Ascending aorta (tissue), 2 donors: ENCODE measurements at regions of chr9 and their contacts with region 1.

Region 1: GRCh38 chr9:136567651-136568287 is 21.9 kb upstream of the NOTCH1 start:
- DNase-seq: peak; percentile 55 to 90
- H3K4me3 ChIP-seq: peak overlapping the region in 1 of 2 donors; percentile 14
- H3K27ac ChIP-seq: peak overlapping the region; percentile 65 to 66
- H3K4me1 ChIP-seq: peaks cover 34 to 58% of the 10 kb centered on the region in 2 donors
- H3K27me3 ChIP-seq: no peaks in the 10 kb centered on the region
- CTCF ChIP-seq: no peak

Region 2: DNA sequence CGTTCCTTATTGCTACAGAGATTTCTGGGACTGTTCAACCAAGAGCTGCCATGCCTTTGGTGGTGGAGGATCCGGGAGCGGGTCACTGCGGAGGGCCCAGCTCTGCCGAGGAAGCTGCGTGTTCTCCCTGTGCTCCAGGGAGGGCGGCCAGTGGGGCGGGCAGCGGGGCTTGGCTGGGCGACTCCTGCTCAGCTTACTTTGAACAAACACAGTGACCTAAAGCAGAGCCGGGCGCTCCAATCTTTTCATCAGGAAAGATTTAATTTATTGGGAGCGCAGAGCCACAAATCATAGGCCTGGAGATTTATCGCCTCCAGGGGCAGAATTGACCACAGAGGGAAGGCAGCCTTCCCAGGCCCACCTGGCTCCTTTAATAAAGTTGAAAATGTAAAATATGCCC is 390.5 kb before region 1 on chr9:
- intact Hi-C with region 1: no loop called
- DNase-seq: no peak
- H3K4me3 ChIP-seq: no peak overlapping the region
- H3K27ac ChIP-seq: no peak overlapping the region
- H3K4me1 ChIP-seq: no peaks in the 10 kb centered on the region
- H3K27me3 ChIP-seq: no peaks in the 10 kb centered on the region
- CTCF ChIP-seq: no peak

Region 3: GRCh38 chr9:136527721-136528691 is 39.8 kb before region 1 on chr9:
- intact Hi-C with region 1: loop called (anchors 10 kb)
- DNase-seq: no peak
- H3K4me3 ChIP-seq: no peak overlapping the region
- H3K27ac ChIP-seq: no peak overlapping the region
- H3K4me1 ChIP-seq: peaks cover 0 to 25% of the 10 kb centered on the region in 2 donors
- H3K27me3 ChIP-seq: no peaks in the 10 kb centered on the region
- CTCF ChIP-seq: no peak

Region 4: DNA sequence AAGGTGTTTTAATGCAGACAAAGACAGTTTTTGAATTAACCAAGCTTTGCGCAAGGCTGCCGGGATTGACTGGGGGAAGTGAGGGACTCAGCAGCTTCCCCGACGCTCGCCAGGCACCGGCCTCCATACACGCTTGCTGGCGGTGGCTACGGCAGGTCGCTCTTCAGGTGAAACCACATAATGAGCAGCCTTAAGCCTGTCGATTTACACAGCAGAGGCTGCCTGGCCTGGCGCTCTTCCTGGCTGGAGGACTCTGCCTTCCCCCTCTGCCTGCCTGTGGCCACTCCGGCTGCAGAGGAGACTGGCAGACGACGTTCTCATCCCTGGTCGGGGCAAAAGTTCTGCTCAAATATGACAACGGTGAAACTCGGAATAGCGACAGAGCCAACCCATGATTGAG is 12.9 kb before region 1 on chr9:
- intact Hi-C with region 1: no loop called
- DNase-seq: no peak
- H3K4me3 ChIP-seq: no peak overlapping the region
- H3K27ac ChIP-seq: no peak overlapping the region
- H3K4me1 ChIP-seq: peaks cover 14 to 35% of the 10 kb centered on the region in 2 donors
- H3K27me3 ChIP-seq: no peaks in the 10 kb centered on the region
- CTCF ChIP-seq: no peak

Region 5: GRCh38 chr9:136605988-136606660 is 38.4 kb after region 1 on chr9:
- intact Hi-C with region 1: loop called (anchors 5 kb)
- DNase-seq: peak in 1 of 2 donors; percentile 79
- H3K4me3 ChIP-seq: no peak overlapping the region
- H3K27ac ChIP-seq: peak overlapping the region; percentile 37 to 60
- H3K4me1 ChIP-seq: peaks cover 11 to 35% of the 10 kb centered on the region in 2 donors
- H3K27me3 ChIP-seq: no peaks in the 10 kb centered on the region
- CTCF ChIP-seq: no peak

Region 6: DNA sequence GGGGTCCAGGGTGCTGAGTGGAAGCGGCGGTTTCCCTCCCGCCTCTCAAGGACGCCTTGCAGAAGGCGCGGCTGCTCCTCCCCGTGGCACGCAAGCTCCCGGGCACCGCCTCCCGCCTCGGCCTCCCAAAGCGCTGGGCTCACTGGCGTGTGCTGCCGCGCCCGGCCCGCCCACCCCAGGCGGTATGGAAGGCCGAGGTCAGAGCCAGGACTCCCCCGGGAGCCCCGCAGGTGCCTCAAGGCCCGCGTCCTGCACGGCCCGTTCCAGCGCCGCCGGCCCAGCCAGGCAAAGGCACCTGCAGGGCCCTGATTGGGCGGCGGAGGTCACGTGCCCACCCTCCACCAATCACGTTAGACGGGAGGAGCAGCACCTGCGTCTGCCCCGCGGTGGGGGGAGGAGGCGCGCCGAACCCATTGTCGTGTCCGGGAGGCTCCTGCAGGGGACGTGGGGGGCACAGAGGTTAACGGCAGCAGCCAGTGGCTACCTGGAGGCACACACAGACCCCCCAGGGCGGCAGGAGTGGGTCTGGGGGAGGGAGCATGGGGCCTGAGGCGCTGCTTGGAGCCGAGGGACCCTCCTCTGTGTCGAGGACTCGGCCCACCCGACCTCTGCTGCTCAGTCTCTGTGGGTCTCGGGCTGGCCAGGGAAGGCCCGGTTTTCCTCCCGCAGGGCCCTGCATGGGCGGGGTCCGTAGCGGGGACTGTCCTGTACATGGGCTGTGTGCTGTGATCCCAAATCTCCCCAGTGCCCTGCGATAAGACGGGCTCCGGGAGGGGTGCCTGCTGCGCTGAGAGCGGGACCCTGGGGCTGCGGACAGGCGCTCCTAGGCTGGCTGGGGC is 382.3 kb after region 1 on chr9:
- intact Hi-C with region 1: no loop called
- DNase-seq: peak; percentile 88 to 96
- H3K4me3 ChIP-seq: peak overlapping the region; percentile 62 to 83
- H3K27ac ChIP-seq: peak overlapping the region; percentile 81 to 88
- H3K4me1 ChIP-seq: peaks cover 0 to 12% of the 10 kb centered on the region in 2 donors
- H3K27me3 ChIP-seq: no peaks in the 10 kb centered on the region
- CTCF ChIP-seq: peak in 2 of 3 experiments; percentile 10 to 25